ENCODE measurements at regions of chr5 and their contacts with region 1.

Region 1: GRCh38 chr5:7827610-7828009 is 23.3 kb downstream of the CFAP90 start:
- DNase-seq: no peak
- ATAC-seq: no peak
- H3K4me3 Mint-ChIP-seq: no peak overlapping the region
- H3K27ac Mint-ChIP-seq: no peak overlapping the region
- H3K4me1 Mint-ChIP-seq: no peaks in the 10 kb centered on the region
- H3K27me3 Mint-ChIP-seq: peaks cover 12% of the 10 kb centered on the region
- CTCF ChIP-seq: no peak

Region 2: GRCh38 chr5:7815892-7816534 is 11.6 kb before region 1 on chr5:
- CTCF ChIA-PET with region 1: interaction called, 10 read pairs
- POLR2A ChIA-PET with region 1: no interaction called
- intact Hi-C with region 1: no loop called
- DNase-seq: peak; percentile 76
- ATAC-seq: peak; percentile 84
- H3K4me3 Mint-ChIP-seq: no peak overlapping the region
- H3K27ac Mint-ChIP-seq: no peak overlapping the region
- H3K4me1 Mint-ChIP-seq: no peaks in the 10 kb centered on the region
- H3K27me3 Mint-ChIP-seq: peaks cover 29% of the 10 kb centered on the region
- CTCF ChIP-seq: peak; percentile 72

Region 3: DNA sequence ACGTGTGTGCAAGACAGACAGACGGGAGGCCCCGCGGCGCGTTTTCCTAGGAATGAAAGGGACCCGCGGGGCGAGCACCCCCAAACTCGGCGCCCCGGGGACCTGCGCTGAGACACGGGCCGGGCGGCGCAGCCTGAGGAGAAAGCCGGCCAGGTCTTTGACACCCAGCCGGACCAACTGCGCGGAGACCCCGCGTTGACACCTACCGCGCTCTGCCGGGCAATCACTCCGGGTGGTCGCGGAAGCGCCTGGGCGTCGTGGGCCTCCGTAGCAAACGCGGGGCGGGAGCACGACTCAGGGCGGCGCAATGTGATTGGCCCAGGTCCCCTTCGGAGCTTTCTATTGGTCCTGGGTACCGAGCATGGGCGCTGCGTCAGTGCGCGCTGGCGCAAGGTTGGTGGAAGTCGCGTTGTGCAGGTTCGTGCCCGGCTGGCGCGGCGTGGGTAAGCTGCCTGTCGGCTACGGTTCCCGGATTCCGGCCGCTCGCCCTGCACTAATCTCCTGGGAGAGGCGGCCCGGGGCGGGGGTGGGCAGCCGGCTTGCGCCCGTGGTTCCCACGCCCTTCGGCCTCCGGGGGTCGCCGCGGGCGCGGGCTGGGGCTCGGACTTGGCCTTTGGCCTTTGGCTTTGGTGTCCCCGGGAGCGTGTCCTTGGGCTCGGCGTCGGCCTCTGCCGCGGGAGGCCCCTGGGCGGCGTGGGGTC is 41.3 kb after region 1 on chr5 and contains the starts of genes FASTKD3 and MTRR:
- CTCF ChIA-PET with region 1: no interaction called
- POLR2A ChIA-PET with region 1: no interaction called
- intact Hi-C with region 1: no loop called
- DNase-seq: peak; percentile 95
- ATAC-seq: peak; percentile 99
- H3K4me3 Mint-ChIP-seq: peak within 1 kb of the TSS; percentile 95
- H3K27ac Mint-ChIP-seq: peak within 1 kb of the TSS; percentile 91
- H3K4me1 Mint-ChIP-seq: peaks cover 71% of the 10 kb centered on the region
- H3K27me3 Mint-ChIP-seq: no peaks in the 10 kb centered on the region
- CTCF ChIP-seq: no peak
- total RNA-seq, gene FASTKD3: 10.6 to 10.7 TPM
- total RNA-seq, gene MTRR: 54.3 to 57.8 TPM

Measured in activated CD8-positive, alpha-beta T cell treated with anti-CD3 and anti-CD28 coated beads for 36 hours (primary cell).